Dorsolateral prefrontal cortex (tissue), 120 donors: ENCODE measurements at regions of chr13 and their contacts with region 1.

Region 1: GRCh38 chr13:27826379-27827353 is 34.4 kb downstream of the GSX1 start:
- DNase-seq: peak; percentile 65 to 87 (median 80)
- H3K4me3 ChIP-seq: peak overlapping the region in 44 of 59 donors; percentile 4 to 65 (median 38)
- H3K27ac ChIP-seq: no peak overlapping the region
- H3K27me3 ChIP-seq: peaks cover 8 to 88% (median 65%) of the 10 kb centered on the region in 45 donors
- CTCF ChIP-seq: peak; percentile 86 to 99 (median 98)

Region 2: GRCh38 chr13:27374650-27375049 is 452.0 kb before region 1 on chr13:
- intact Hi-C with region 1: loop called (anchors 2 to 5 kb)
- DNase-seq: peak in 8 of 10 donors; percentile 47 to 69 (median 56)
- H3K4me3 ChIP-seq: peak overlapping the region in 2 of 59 donors; percentile 13 to 21
- H3K27ac ChIP-seq: no peak overlapping the region
- H3K27me3 ChIP-seq: peaks cover 0 to 35% (median 9%) of the 10 kb centered on the region in 45 donors
- CTCF ChIP-seq: peak; percentile 39 to 89 (median 76)

Region 3: GRCh38 chr13:27406178-27406939 is 420.3 kb before region 1 on chr13:
- intact Hi-C with region 1: loop called in 1 of 2 experiments (anchors 10 kb)
- DNase-seq: peak in 2 of 10 donors; percentile 10 to 15
- H3K4me3 ChIP-seq: no peak overlapping the region
- H3K27ac ChIP-seq: no peak overlapping the region
- H3K27me3 ChIP-seq: peaks cover 0 to 15% (median 0%) of the 10 kb centered on the region in 45 donors
- CTCF ChIP-seq: peak in 55 of 56 donors; percentile 22 to 69 (median 52)

Region 4: GRCh38 chr13:27533155-27533643 is 293.5 kb before region 1 on chr13:
- intact Hi-C with region 1: loop called (anchors 5 kb)
- DNase-seq: peak; percentile 66 to 89 (median 80)
- H3K4me3 ChIP-seq: peak overlapping the region in 44 of 59 donors; percentile 2 to 57 (median 37)
- H3K27ac ChIP-seq: no peak overlapping the region
- H3K27me3 ChIP-seq: no peaks in the 10 kb centered on the region
- CTCF ChIP-seq: peak; percentile 51 to 98 (median 89)

Region 5: DNA sequence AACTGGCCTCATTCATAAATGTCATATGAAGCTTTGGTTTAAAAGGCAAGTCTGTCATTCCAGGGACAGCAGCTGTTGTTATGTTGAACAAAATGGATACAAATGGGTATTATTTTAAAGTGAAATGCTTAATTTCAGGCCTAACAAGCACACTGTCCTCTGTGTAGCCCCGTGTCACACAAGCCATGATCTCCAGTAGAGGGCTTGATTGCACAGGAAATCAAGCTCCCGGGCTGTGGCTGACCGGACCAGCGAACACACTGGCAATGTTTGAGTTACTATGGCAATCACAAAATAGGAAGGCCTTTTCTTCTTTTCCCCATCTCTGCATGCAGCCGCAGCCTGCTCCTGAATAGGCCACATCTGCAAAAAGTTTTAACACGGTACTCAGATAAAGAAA is 98.4 kb before region 1 on chr13:
- intact Hi-C with region 1: loop called in 1 of 2 experiments (anchors 1 kb)
- DNase-seq: peak in 5 of 10 donors; percentile 7 to 52 (median 38)
- H3K4me3 ChIP-seq: no peak overlapping the region
- H3K27ac ChIP-seq: no peak overlapping the region
- H3K27me3 ChIP-seq: peaks cover 0 to 5% (median 0%) of the 10 kb centered on the region in 45 donors
- CTCF ChIP-seq: peak in 46 of 56 donors; percentile 13 to 61 (median 37)

Region 6: DNA sequence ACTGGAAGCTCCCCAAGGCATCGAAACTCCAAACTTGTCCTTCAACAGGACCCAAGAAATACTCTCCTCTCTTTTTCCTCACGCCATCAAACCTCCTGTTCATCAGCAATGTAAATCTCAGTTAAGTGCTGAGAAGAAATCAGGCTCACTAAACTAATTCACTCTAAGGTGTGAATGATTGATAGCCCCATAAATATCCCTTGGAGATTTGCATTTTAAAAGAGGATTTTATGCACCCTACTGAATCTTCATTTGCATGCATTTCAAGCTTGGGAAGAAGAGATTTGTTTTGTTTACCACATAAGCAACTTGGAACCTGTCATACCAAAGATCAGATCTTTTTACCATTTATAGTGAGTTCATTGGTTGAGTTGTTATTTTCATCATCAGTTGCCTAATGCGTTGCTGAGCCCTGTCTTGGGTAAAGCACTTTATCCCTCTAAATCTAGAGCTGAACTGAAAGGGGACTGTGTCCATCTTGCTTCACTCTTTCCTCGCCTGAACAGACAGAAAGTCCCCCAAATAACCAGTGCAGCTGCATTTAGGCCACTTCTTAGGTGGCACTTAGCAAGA is 74.6 kb before region 1 on chr13:
- intact Hi-C with region 1: no loop called
- DNase-seq: no peak
- H3K4me3 ChIP-seq: no peak overlapping the region
- H3K27ac ChIP-seq: no peak overlapping the region
- H3K27me3 ChIP-seq: peaks cover 0 to 12% (median 0%) of the 10 kb centered on the region in 45 donors
- CTCF ChIP-seq: no peak

Region 7: DNA sequence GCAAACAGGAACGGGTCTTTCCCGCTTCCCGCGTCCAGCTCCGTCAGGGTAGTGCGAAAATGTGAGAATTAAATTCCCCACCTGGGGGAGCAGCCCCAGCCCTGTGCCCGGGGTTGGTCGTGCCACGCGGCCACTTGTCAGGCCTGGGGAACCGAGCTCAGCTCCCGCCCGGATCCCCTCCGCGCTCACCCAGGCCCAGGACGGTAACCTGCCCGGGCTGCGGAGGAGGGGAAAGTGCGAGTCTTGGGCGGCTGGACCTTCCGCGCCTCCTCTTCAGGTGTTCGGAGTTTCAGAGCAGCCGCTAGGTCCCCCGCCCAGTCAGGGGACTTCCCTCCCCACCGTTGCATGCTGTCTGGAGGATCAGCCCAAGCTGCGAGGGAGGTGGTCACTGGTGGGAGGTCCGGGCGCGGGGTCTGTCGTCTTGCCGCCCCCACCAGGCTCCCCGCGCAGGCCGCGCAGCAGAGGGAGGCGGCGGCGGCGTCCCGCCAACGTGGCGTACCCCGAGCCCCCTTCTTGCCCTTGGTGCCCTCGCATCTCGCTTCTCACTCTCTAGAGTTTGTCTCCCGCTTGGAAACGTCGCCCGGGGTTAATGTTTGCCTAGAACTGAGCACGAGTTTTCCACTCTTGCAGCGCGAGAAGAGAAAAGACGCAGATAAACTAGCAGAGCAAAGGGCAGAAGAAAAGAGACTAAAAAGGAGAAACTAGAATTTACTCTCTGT is 153.8 kb after region 1 on chr13:
- intact Hi-C with region 1: loop called (anchors 2 to 5 kb)
- DNase-seq: peak in 1 of 10 donors; percentile 33
- H3K4me3 ChIP-seq: peak overlapping the region in 2 of 59 donors; percentile 4 to 23
- H3K27ac ChIP-seq: no peak overlapping the region
- H3K27me3 ChIP-seq: peaks cover 35 to 97% (median 86%) of the 10 kb centered on the region in 45 donors
- CTCF ChIP-seq: no peak

Region 8: DNA sequence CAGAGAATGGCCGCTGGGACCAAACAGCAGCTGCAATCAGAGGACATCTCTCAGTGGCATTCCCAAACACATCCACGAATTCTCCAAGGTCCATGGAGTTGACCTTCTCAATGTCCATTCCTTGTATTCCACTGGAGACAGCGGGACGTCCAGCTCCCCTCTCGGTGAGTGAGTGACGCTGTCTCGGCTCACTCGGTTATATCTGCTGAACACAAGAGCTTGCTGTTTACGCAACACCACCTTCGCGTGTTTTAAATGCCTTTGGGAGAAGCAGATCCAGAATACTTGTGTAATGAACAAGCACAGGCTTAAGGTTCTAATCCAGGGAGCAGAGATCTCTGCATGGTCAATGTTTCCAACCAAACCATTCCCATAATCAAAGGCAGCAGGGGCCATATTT is 161.9 kb after region 1 on chr13 and contains the start of gene URAD:
- intact Hi-C with region 1: loop called (anchors 2 to 5 kb)
- DNase-seq: no peak
- H3K4me3 ChIP-seq: no peak within 1 kb of the TSS
- H3K27ac ChIP-seq: no peak within 1 kb of the TSS
- H3K27me3 ChIP-seq: peaks cover 0 to 46% (median 16%) of the 10 kb centered on the region in 45 donors
- CTCF ChIP-seq: no peak
- total RNA-seq, gene URAD: 0.52 to 0.68 TPM in 2 of 120 experiments, not detected in the others